GM12878 (cell line): ENCODE measurements at regions of chr4 and their contacts with region 1.

Region 1: GRCh38 chr4:116400480-116400879 is 684.9 kb downstream of the TRAM1L1 start:
- DNase-seq: no peak
- ATAC-seq: no peak
- H3K4me3 ChIP-seq: no peak overlapping the region
- H3K27ac ChIP-seq: no peak overlapping the region
- H3K4me1 ChIP-seq: no peaks in the 10 kb centered on the region
- H3K27me3 ChIP-seq: no peaks in the 10 kb centered on the region
- CTCF ChIP-seq: no peak
- EP300 ChIP-seq: no peak
- POLR2A ChIP-seq: no peak
- RAD21 ChIP-seq: no peak

Region 2: GRCh38 chr4:116389139-116389538 is 11.3 kb before region 1 on chr4:
- CTCF ChIA-PET with region 1: interaction called, 3 read pairs
- POLR2A ChIA-PET with region 1: no interaction called
- RAD21 ChIA-PET with region 1: interaction called, 3 read pairs
- SMC1A ChIA-PET with region 1: interaction called, 13 read pairs
- in situ Hi-C with region 1: no loop called
- intact Hi-C with region 1: no loop called
- DNase-seq: no peak
- ATAC-seq: peak; percentile 81
- H3K4me3 ChIP-seq: no peak overlapping the region
- H3K27ac ChIP-seq: no peak overlapping the region
- H3K4me1 ChIP-seq: no peaks in the 10 kb centered on the region
- H3K27me3 ChIP-seq: no peaks in the 10 kb centered on the region
- CTCF ChIP-seq: no peak
- EP300 ChIP-seq: no peak
- POLR2A ChIP-seq: no peak
- RAD21 ChIP-seq: no peak; the same call in 1 of the 2 replicates

Region 3: DNA sequence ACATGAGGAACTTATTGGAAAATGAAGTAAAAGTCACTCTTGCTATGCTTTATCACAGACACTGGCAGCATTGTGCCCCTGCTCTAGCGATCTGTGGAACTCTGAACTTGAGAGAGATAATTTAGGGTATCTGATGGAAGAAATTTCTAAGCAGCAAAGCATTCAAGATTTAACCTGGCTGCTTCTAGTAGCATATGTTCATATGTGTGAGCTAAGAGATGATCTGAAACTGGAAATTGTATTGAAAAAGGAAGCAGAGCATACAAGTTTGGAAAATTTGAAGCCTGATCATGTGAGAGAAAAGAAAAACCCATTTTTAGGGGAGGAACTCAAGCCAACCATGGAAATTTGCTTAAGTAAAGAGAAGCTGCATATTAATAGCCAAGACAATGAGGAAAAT is 27.2 kb after region 1 on chr4:
- CTCF ChIA-PET with region 1: no interaction called
- POLR2A ChIA-PET with region 1: no interaction called
- RAD21 ChIA-PET with region 1: no interaction called
- SMC1A ChIA-PET with region 1: no interaction called
- in situ Hi-C with region 1: no loop called
- intact Hi-C with region 1: no loop called
- DNase-seq: no peak
- ATAC-seq: no peak
- H3K4me3 ChIP-seq: no peak overlapping the region
- H3K27ac ChIP-seq: no peak overlapping the region
- H3K4me1 ChIP-seq: no peaks in the 10 kb centered on the region
- H3K27me3 ChIP-seq: no peaks in the 10 kb centered on the region
- CTCF ChIP-seq: no peak
- EP300 ChIP-seq: no peak
- POLR2A ChIP-seq: no peak
- RAD21 ChIP-seq: no peak

Region 4: DNA sequence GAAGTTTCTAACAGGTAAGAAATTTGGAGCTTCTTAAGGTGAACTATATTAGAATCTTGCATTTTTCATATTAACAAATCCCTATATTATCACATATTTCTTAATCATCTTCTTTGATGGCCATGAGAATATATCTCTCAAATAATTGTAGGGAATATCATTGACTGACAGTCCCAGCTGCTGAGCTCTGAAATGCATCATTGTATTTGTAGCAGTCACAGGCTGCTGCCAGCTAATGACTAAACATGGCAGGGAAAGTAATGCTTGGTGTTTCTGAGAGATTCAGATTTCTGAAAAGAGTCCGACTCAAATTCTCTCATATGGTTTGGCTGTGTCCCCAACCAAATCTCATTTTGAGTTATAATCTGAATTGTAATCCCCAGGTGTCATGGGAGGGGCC is 513.0 kb after region 1 on chr4:
- CTCF ChIA-PET with region 1: no interaction called
- POLR2A ChIA-PET with region 1: no interaction called
- RAD21 ChIA-PET with region 1: no interaction called
- SMC1A ChIA-PET with region 1: no interaction called
- in situ Hi-C with region 1: no loop called
- intact Hi-C with region 1: no loop called
- DNase-seq: no peak
- ATAC-seq: no peak
- H3K4me3 ChIP-seq: no peak overlapping the region
- H3K27ac ChIP-seq: no peak overlapping the region
- H3K4me1 ChIP-seq: no peaks in the 10 kb centered on the region
- H3K27me3 ChIP-seq: no peaks in the 10 kb centered on the region
- CTCF ChIP-seq: no peak
- EP300 ChIP-seq: no peak
- POLR2A ChIP-seq: no peak
- RAD21 ChIP-seq: no peak

Region 5: GRCh38 chr4:117610706-117611283 is 1210.3 kb after region 1 on chr4:
- CTCF ChIA-PET with region 1: no interaction called
- POLR2A ChIA-PET with region 1: no interaction called
- RAD21 ChIA-PET with region 1: no interaction called
- SMC1A ChIA-PET with region 1: no interaction called
- in situ Hi-C with region 1: no loop called
- intact Hi-C with region 1: no loop called
- DNase-seq: no peak
- ATAC-seq: no peak
- H3K4me3 ChIP-seq: no peak overlapping the region
- H3K27ac ChIP-seq: no peak overlapping the region
- H3K4me1 ChIP-seq: no peaks in the 10 kb centered on the region
- H3K27me3 ChIP-seq: no peaks in the 10 kb centered on the region
- CTCF ChIP-seq: no peak
- EP300 ChIP-seq: no peak
- POLR2A ChIP-seq: no peak
- RAD21 ChIP-seq: no peak

Region 6: GRCh38 chr4:118180776-118181175 is 1780.3 kb after region 1 on chr4:
- CTCF ChIA-PET with region 1: no interaction called
- POLR2A ChIA-PET with region 1: no interaction called
- RAD21 ChIA-PET with region 1: no interaction called
- SMC1A ChIA-PET with region 1: no interaction called
- in situ Hi-C with region 1: no loop called
- intact Hi-C with region 1: no loop called
- DNase-seq: no peak
- ATAC-seq: no peak
- H3K4me3 ChIP-seq: no peak overlapping the region
- H3K27ac ChIP-seq: no peak overlapping the region
- H3K4me1 ChIP-seq: no peaks in the 10 kb centered on the region
- H3K27me3 ChIP-seq: no peaks in the 10 kb centered on the region
- CTCF ChIP-seq: no peak
- EP300 ChIP-seq: no peak
- POLR2A ChIP-seq: no peak
- RAD21 ChIP-seq: no peak